Tibial artery (tissue), 4 donors: ENCODE measurements at regions of chr5 and their contacts with region 1.

Region 1: GRCh38 chr5:17216176-17216973 is 1.1 kb upstream of the BASP1 start:
- DNase-seq: peak; percentile 68 to 88
- H3K4me3 ChIP-seq: peak overlapping the region; percentile 75 to 76
- H3K27ac ChIP-seq: peak overlapping the region; percentile 84 to 85
- H3K4me1 ChIP-seq: peaks cover 0 to 29% (median 11%) of the 10 kb centered on the region in 4 donors
- H3K27me3 ChIP-seq: no peaks in the 10 kb centered on the region
- CTCF ChIP-seq: peak; percentile 67 to 74

Region 2: DNA sequence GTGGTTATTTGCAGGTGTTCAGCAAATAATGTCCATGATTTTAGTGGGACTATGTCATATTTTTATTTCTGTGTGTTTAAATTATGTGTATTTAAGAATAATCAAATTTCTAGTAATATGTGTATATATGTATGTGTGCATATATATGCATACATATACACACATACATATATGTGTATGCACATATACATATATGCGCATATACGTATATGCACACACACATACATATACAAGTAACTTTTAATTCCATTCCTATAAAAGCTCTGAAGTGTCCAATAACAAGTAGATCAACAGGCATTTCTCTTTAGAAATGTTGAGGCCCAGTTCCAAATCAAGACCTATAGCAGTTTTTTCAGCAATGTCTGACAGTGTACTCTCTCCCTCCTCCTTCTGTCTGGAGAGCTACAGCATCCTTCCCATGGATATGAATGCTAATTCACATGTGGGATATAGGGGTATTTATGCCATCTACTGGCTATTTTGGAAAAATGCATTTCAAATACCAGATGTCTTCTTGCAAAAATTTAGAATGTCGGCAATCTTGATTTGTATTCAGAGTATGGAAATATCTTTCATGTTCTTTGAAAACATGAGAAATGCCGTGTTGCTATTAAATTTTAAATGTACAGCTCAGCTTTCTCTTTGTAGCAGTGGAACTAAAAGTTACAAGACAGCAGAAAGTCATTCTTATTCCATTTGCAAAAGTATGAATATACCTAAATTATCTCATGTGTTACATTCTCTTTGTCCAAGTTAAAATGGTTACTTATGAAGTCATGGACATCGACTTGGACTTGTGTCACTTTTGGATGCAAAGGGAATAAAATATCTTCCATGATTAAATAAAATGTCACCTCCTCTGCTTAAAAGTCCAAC is 1065.5 kb after region 1 on chr5:
- intact Hi-C with region 1: loop called (anchors 10 kb)
- DNase-seq: no peak
- H3K4me3 ChIP-seq: no peak overlapping the region
- H3K27ac ChIP-seq: no peak overlapping the region
- H3K4me1 ChIP-seq: no peaks in the 10 kb centered on the region
- H3K27me3 ChIP-seq: no peaks in the 10 kb centered on the region
- CTCF ChIP-seq: peak; percentile 18 to 35